ENCODE measurements at regions of chr6 and their contacts with region 1.

Region 1: DNA sequence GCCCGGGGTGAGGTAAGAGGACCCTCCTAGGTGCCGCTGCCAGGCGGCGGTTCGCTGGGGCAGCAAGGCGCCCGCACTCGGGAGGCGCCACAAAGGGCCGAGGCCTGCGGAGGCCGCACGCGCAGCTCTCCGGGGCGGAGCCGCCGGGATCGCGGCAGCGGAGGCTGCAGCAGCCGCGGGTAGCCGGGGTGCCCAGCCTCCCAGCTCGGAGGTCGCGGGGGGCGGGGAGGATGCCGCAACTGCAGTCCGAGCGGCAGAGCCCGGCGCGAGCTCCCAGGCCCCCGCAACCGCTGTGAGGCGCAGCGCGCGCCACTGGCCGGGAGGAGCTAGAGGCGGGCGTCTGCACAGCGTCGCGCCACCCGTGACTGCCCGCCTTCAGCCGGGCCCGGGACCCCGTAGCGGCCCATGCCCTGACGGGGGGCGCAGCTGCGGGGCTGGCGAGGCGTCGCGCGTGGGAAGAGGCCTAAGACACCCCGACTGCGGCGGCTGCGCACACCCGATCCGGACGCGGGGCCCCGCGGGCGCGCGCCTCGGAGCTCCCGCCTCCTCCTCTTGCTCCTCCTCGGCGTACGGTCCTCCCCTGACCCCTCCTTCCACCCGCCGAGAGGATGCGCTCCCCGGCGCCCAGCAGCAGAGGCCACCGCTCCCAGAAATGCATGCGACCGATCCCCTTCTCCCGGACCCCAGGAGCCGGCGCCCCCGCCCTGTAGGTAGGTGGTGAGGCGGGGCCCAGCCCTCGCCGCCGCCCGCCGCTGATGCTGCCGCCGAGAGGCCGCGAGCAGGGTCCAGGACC is at the start of gene NCOA7:
- DNase-seq: peak; percentile 72 to 89 (median 78)
- ATAC-seq: peak; percentile 77 to 79
- H3K4me3 Mint-ChIP-seq: peak within 1 kb of the TSS; percentile 87 to 97 (median 94)
- H3K27ac Mint-ChIP-seq: peak within 1 kb of the TSS; percentile 96 to 99 (median 98)
- H3K4me1 Mint-ChIP-seq: peaks cover 17 to 54% (median 40%) of the 10 kb centered on the region in 4 donors
- H3K27me3 Mint-ChIP-seq: no peaks in the 10 kb centered on the region
- polyA plus RNA-seq, gene NCOA7: 9.4 to 16.5 (median 13.5) TPM

Region 2: GRCh38 chr6:125301435-125302391 is 488.8 kb before region 1 on chr6 and contains the start of gene HDDC2:
- POLR2A ChIA-PET with region 1: interaction called, 23 read pairs
- DNase-seq: peak; percentile 10 to 77 (median 33)
- ATAC-seq: peak; percentile 42 to 57
- H3K4me3 Mint-ChIP-seq: peak within 1 kb of the TSS; percentile 85 to 96 (median 92)
- H3K27ac Mint-ChIP-seq: peak within 1 kb of the TSS; percentile 89 to 98 (median 93)
- H3K4me1 Mint-ChIP-seq: peaks cover 46 to 60% (median 56%) of the 10 kb centered on the region in 4 donors
- H3K27me3 Mint-ChIP-seq: peaks cover 0 to 10% (median 4%) of the 10 kb centered on the region in 5 donors
- polyA plus RNA-seq, gene HDDC2: 118 to 134 (median 119) TPM

Region 3: GRCh38 chr6:125637207-125637606 is 153.3 kb before region 1 on chr6:
- POLR2A ChIA-PET with region 1: no interaction called
- DNase-seq: no peak
- ATAC-seq: no peak
- H3K4me3 Mint-ChIP-seq: no peak overlapping the region
- H3K27ac Mint-ChIP-seq: no peak overlapping the region
- H3K4me1 Mint-ChIP-seq: no peaks in the 10 kb centered on the region
- H3K27me3 Mint-ChIP-seq: peaks cover 0 to 13% (median 4%) of the 10 kb centered on the region in 5 donors

Region 4: DNA sequence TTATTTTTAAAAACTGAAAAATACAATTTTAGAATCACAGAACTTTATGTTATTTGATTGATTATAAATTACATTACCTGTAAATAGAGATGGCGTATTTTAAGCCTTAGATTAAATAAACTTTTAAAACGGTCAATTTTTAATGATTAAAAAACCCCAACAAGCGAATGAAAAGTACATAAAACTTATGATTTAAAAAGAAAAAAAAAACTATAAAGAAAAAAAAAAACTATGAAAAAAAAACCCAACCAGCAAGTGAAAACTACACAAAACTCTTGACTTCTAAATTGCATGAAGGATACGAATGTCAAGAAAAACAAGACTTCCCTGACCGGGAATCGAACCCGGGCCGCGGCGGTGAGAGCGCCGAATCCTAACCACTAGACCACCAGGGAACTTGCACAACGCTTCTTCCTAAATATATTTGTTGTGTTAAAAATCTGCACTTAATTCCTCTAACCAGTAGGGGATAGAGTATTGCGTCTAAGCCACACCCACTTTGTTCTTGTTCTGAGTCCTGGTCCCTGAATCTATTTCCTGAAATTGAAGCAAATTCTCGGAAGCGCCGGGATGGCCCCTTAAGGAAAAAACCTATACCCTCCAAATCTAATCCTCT is 10.5 kb before region 1 on chr6:
- POLR2A ChIA-PET with region 1: interaction called, 271 read pairs
- DNase-seq: peak; percentile 71 to 98 (median 88)
- ATAC-seq: peak; percentile 77 to 79
- H3K4me3 Mint-ChIP-seq: no peak overlapping the region
- H3K27ac Mint-ChIP-seq: no peak overlapping the region
- H3K4me1 Mint-ChIP-seq: peaks cover 6 to 16% (median 13%) of the 10 kb centered on the region in 4 donors
- H3K27me3 Mint-ChIP-seq: peaks cover 0 to 4% (median 0%) of the 10 kb centered on the region in 5 donors

Region 5: GRCh38 chr6:125956506-125957390 is 166.2 kb after region 1 on chr6 and contains the start of gene HINT3:
- POLR2A ChIA-PET with region 1: interaction called, 68 read pairs
- DNase-seq: peak; percentile 95 to 98 (median 98)
- ATAC-seq: peak; percentile 87
- H3K4me3 Mint-ChIP-seq: peak within 1 kb of the TSS in 1 of 10 donors; percentile 55
- H3K27ac Mint-ChIP-seq: peak within 1 kb of the TSS in 2 of 10 donors; percentile 83 to 95
- H3K4me1 Mint-ChIP-seq: peaks cover 4 to 26% (median 10%) of the 10 kb centered on the region in 4 donors
- H3K27me3 Mint-ChIP-seq: peaks cover 4 to 10% (median 5%) of the 10 kb centered on the region in 5 donors
- polyA plus RNA-seq, gene HINT3: 7.9 to 10.4 (median 8.5) TPM

Region 6: GRCh38 chr6:127266178-127266891 is 1475.8 kb after region 1 on chr6 and contains the start of gene RNF146:
- POLR2A ChIA-PET with region 1: interaction called, 13 read pairs
- DNase-seq: peak; percentile 48 to 85 (median 70)
- ATAC-seq: peak; percentile 78 to 79
- H3K4me3 Mint-ChIP-seq: peak within 1 kb of the TSS; percentile 94 to 100 (median 99)
- H3K27ac Mint-ChIP-seq: peak within 1 kb of the TSS; percentile 94 to 100 (median 98)
- H3K4me1 Mint-ChIP-seq: peaks cover 18 to 47% (median 38%) of the 10 kb centered on the region in 4 donors
- H3K27me3 Mint-ChIP-seq: peaks cover 0 to 2% (median 0%) of the 10 kb centered on the region in 5 donors
- polyA plus RNA-seq, gene RNF146: 8.6 to 11.6 (median 9.3) TPM